ENCODE measurements at regions of chr9 and their contacts with region 1.

Region 1: GRCh38 chr9:90870621-90871326 is 69.2 kb downstream of the SYK start:
- DNase-seq: peak; percentile 27
- ATAC-seq: peak; percentile 69
- H3K4me3 ChIP-seq: no peak overlapping the region
- H3K27ac ChIP-seq: no peak overlapping the region
- H3K4me1 ChIP-seq: no peaks in the 10 kb centered on the region
- H3K27me3 ChIP-seq: no peaks in the 10 kb centered on the region
- CTCF ChIP-seq: peak; percentile 72 to 91 (median 84); a peak in 5 of 6 replicates
- POLR2A ChIP-seq: no peak
- RAD21 ChIP-seq: peak; percentile 85

Region 2: GRCh38 chr9:90142580-90142979 is 728.2 kb before region 1 on chr9:
- CTCF ChIA-PET with region 1: interaction called, 19 read pairs
- POLR2A ChIA-PET with region 1: no interaction called
- RAD21 ChIA-PET with region 1: no interaction called
- intact Hi-C with region 1: loop called (anchors 10 kb)
- DNase-seq: peak; percentile 21
- ATAC-seq: peak; percentile 47; the same call in 1 of the 2 replicates
- H3K4me3 ChIP-seq: no peak overlapping the region
- H3K27ac ChIP-seq: no peak overlapping the region
- H3K4me1 ChIP-seq: no peaks in the 10 kb centered on the region
- H3K27me3 ChIP-seq: peaks cover 20% of the 10 kb centered on the region
- CTCF ChIP-seq: peak; percentile 48 to 74 (median 48)
- POLR2A ChIP-seq: no peak
- RAD21 ChIP-seq: peak; percentile 66

Region 3: DNA sequence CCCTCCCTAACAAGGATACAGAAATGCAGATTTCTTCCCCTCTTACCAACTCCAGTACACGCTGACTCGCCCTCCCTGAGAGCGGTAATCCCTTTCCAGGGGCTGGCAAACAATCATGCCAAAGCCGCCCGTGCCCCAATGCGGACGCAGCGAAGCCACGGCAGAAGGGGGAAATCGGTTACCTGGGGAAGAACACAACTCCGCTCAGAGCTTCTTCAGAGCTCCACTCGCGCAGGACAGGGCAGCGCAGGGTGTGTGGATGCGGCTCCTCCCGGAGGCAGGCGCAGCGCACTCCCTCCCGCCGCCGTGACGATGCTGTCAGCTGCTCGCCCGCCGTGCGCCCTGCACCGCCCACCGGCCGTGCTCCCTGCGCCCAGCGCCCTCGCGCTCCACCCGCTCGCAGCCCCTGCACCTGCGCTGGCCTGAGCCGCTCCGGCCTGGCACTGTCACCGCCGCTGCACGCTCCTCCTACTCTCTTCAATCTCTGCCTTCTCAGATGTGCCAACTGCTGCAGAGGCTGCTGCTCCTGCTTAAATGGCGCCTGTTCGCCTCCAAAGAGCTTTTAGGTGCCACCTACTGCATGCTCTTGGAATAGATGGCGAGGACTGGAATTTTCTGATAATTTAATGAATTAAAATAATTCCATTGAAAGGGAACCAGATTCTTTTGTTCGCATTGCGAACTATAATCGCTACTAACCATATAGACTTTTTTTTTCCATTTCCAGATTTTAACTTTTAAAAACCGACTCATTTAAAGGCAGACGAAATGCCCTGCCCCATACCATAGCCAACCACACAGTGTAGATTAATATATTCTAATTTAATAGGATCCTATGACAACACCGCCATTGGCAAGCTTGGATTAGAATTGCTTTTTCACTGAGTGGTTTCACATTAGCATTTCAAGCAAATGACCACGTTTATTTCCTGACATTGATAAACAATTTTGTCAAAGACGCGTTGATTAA is 227.9 kb before region 1 on chr9 and contains the start of gene DIRAS2:
- CTCF ChIA-PET with region 1: no interaction called
- POLR2A ChIA-PET with region 1: no interaction called
- RAD21 ChIA-PET with region 1: no interaction called
- intact Hi-C with region 1: loop called (anchors 10 kb)
- DNase-seq: peak; percentile 6
- ATAC-seq: peak; percentile 69
- H3K4me3 ChIP-seq: no peak within 1 kb of the TSS
- H3K27ac ChIP-seq: no peak within 1 kb of the TSS
- H3K4me1 ChIP-seq: no peaks in the 10 kb centered on the region
- H3K27me3 ChIP-seq: peaks cover 38% of the 10 kb centered on the region
- CTCF ChIP-seq: peak in 1 of 3 experiments; percentile 13; a peak in 1 of 6 replicates
- POLR2A ChIP-seq: no peak
- RAD21 ChIP-seq: 0 out of 2 replicates have a peak, but pooled peaks have one; percentile 15
- total RNA-seq, gene DIRAS2: not detected

Region 4: GRCh38 chr9:90741036-90741435 is 129.7 kb before region 1 on chr9:
- CTCF ChIA-PET with region 1: no interaction called
- POLR2A ChIA-PET with region 1: no interaction called
- RAD21 ChIA-PET with region 1: no interaction called
- intact Hi-C with region 1: no loop called
- DNase-seq: no peak
- ATAC-seq: no peak
- H3K4me3 ChIP-seq: no peak overlapping the region
- H3K27ac ChIP-seq: no peak overlapping the region
- H3K4me1 ChIP-seq: no peaks in the 10 kb centered on the region
- H3K27me3 ChIP-seq: no peaks in the 10 kb centered on the region
- CTCF ChIP-seq: no peak
- POLR2A ChIP-seq: no peak
- RAD21 ChIP-seq: no peak

Region 5: GRCh38 chr9:90773617-90774016 is 97.2 kb before region 1 on chr9:
- CTCF ChIA-PET with region 1: interaction called, 4 read pairs
- POLR2A ChIA-PET with region 1: no interaction called
- RAD21 ChIA-PET with region 1: no interaction called
- intact Hi-C with region 1: loop called (anchors 2 kb)
- DNase-seq: no peak
- ATAC-seq: peak; percentile 84
- H3K4me3 ChIP-seq: no peak overlapping the region
- H3K27ac ChIP-seq: no peak overlapping the region
- H3K4me1 ChIP-seq: no peaks in the 10 kb centered on the region
- H3K27me3 ChIP-seq: peaks cover 3% of the 10 kb centered on the region; the same call in 1 of the 2 replicates
- CTCF ChIP-seq: peak; percentile 40 to 65 (median 60); a peak in 5 of 6 replicates
- POLR2A ChIP-seq: no peak
- RAD21 ChIP-seq: peak; percentile 67

Region 6: GRCh38 chr9:90956026-90956810 is 85.4 kb after region 1 on chr9:
- CTCF ChIA-PET with region 1: no interaction called
- POLR2A ChIA-PET with region 1: no interaction called
- RAD21 ChIA-PET with region 1: no interaction called
- intact Hi-C with region 1: no loop called
- DNase-seq: no peak
- ATAC-seq: no peak
- H3K4me3 ChIP-seq: no peak overlapping the region
- H3K27ac ChIP-seq: no peak overlapping the region
- H3K4me1 ChIP-seq: no peaks in the 10 kb centered on the region
- H3K27me3 ChIP-seq: no peaks in the 10 kb centered on the region
- CTCF ChIP-seq: no peak
- POLR2A ChIP-seq: no peak
- RAD21 ChIP-seq: no peak

Region 7: GRCh38 chr9:90991953-90992352 is 121.2 kb after region 1 on chr9:
- CTCF ChIA-PET with region 1: no interaction called
- POLR2A ChIA-PET with region 1: no interaction called
- RAD21 ChIA-PET with region 1: no interaction called
- intact Hi-C with region 1: no loop called
- DNase-seq: no peak
- ATAC-seq: peak; percentile 36; the same call in 1 of the 2 replicates
- H3K4me3 ChIP-seq: no peak overlapping the region
- H3K27ac ChIP-seq: no peak overlapping the region
- H3K4me1 ChIP-seq: peaks cover 8 to 18% of the 10 kb centered on the region in 2 experiments; a peak in 3 of 4 replicates
- H3K27me3 ChIP-seq: peaks cover 4% of the 10 kb centered on the region; the same call in 1 of the 2 replicates
- CTCF ChIP-seq: no peak
- POLR2A ChIP-seq: no peak
- RAD21 ChIP-seq: no peak

Region 8: DNA sequence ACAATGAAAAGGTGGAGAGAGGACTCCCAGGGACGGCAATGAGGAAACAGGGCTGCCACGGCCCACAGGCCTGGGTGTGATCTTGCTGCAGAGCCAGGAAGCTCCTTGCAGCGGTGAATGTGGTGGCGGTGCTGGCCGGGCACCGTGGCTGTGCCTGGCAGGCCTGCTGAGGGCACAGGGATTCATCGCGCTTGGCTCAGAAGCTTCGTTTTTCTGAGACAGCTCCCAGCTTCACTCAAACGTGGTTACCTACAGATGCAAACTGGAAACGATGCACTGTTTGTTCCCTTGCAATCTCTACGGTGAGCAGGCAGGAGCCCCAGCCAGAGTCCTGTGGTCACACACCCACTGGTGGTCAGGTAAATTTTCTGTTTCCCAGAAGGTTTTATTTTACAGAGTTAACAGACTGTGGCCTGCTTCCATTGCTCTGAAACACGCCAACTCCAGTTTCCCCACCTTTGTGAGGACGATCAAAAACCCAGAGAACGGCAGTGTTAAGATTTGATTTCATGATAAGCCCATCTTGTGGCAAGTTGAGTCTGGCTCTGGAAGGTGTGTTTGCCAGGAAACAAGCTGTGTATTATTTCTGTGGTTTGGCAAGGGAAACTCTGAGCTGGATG is 307.0 kb after region 1 on chr9:
- CTCF ChIA-PET with region 1: no interaction called
- POLR2A ChIA-PET with region 1: no interaction called
- RAD21 ChIA-PET with region 1: no interaction called
- intact Hi-C with region 1: no loop called
- DNase-seq: no peak
- ATAC-seq: no peak
- H3K4me3 ChIP-seq: no peak overlapping the region
- H3K27ac ChIP-seq: no peak overlapping the region; the same call in 1 of the 2 replicates
- H3K4me1 ChIP-seq: peaks cover 10 to 27% of the 10 kb centered on the region in 2 experiments
- H3K27me3 ChIP-seq: no peaks in the 10 kb centered on the region
- CTCF ChIP-seq: no peak
- POLR2A ChIP-seq: no peak
- RAD21 ChIP-seq: no peak

Measured in HCT116 (cell line).